A673 (cell line): ENCODE measurements at regions of chr10 and their contacts with region 1.

Region 1: DNA sequence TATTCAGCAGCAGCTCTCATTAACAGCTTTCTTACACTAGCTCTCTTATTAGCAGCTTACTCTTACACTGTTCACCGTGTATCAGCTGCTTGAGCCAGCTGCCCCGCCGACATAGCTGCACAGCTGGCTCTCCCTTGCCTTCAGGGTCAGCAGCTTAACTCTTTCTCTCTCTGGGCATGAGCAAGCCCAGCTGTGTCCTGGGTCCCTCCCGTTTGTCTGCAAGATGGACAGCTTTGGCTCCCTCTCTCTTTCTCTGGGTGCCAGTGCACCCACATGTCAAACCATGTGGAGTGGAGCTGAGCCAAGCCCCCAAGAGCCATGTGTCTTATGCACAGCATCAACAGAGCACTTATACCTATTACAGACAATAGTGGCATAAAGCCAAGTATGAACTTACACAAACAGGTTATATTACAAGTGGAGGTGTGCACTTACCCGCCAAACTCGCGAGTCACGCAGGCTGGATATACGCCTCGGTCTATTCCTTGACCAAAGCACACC is 35.7 kb upstream of the MTPAP start:
- DNase-seq: peak; percentile 76
- H3K4me3 ChIP-seq: no peak overlapping the region
- H3K27ac ChIP-seq: no peak overlapping the region
- H3K4me1 ChIP-seq: no peaks in the 10 kb centered on the region
- H3K27me3 ChIP-seq: no peaks in the 10 kb centered on the region
- CTCF ChIP-seq: peak; percentile 68

Region 2: GRCh38 chr10:29998142-29998808 is 386.5 kb before region 1 on chr10:
- CTCF ChIA-PET with region 1: interaction called, 5 read pairs
- POLR2A ChIA-PET with region 1: no interaction called
- intact Hi-C with region 1: loop called (anchors 2 kb)
- DNase-seq: peak; percentile 90
- H3K4me3 ChIP-seq: no peak overlapping the region
- H3K27ac ChIP-seq: no peak overlapping the region
- H3K4me1 ChIP-seq: peaks cover 23% of the 10 kb centered on the region
- H3K27me3 ChIP-seq: no peaks in the 10 kb centered on the region
- CTCF ChIP-seq: peak; percentile 99

Region 3: GRCh38 chr10:30256084-30256483 is 128.7 kb before region 1 on chr10:
- CTCF ChIA-PET with region 1: no interaction called
- POLR2A ChIA-PET with region 1: interaction called, 18 read pairs
- intact Hi-C with region 1: no loop called
- DNase-seq: no peak
- H3K4me3 ChIP-seq: no peak overlapping the region
- H3K27ac ChIP-seq: no peak overlapping the region
- H3K4me1 ChIP-seq: no peaks in the 10 kb centered on the region
- H3K27me3 ChIP-seq: no peaks in the 10 kb centered on the region
- CTCF ChIP-seq: no peak

Region 4: DNA sequence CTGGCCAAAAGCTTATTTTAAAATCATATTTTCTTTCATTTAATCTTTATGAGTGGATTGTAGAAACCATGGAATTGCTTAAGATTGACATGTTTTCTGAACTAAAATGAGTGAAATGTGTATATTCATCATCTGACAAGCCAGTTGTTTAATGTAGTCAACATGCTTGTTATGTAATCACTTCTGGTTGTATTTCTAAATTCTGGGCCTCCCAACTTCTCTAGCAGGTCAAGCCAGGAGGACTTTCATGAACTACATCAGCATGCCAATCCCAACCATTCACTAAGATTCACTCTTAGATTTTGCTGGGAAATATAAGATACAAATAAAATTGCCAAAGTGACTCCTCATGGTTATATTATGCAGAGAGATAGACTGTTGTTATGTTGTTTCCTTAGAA is 28.1 kb after region 1 on chr10:
- CTCF ChIA-PET with region 1: no interaction called
- POLR2A ChIA-PET with region 1: no interaction called
- intact Hi-C with region 1: no loop called
- DNase-seq: no peak
- H3K4me3 ChIP-seq: no peak overlapping the region
- H3K27ac ChIP-seq: no peak overlapping the region
- H3K4me1 ChIP-seq: no peaks in the 10 kb centered on the region
- H3K27me3 ChIP-seq: no peaks in the 10 kb centered on the region
- CTCF ChIP-seq: no peak